ENCODE measurements at regions of chr15 and their contacts with region 1.

Region 1: GRCh38 chr15:73633111-73633990 is at the start of gene NPTN:
- DNase-seq: peak; percentile 96
- CTCF ChIP-seq: no peak

Region 2: DNA sequence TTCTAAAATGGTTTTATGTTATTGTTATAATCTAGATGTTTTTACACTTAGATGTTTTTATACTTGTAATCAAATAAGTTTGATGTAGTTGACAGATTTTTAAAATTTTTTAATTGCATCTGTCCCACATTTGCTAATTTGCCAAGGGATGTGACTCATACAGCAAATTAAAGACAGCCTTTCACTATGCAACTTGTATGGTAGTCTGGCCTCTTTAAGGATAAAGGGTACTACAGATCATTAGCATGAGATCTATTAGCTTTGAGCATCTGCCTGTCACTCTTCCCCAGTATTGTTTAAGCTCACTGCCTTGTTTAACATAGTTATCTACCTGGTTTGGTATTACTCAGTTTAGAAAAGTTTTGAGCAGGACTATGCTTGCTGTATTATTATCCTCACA is 83.2 kb before region 1 on chr15:
- CTCF ChIA-PET with region 1: interaction called, 31 read pairs
- POLR2A ChIA-PET with region 1: interaction called, 4 read pairs
- DNase-seq: no peak
- CTCF ChIP-seq: no peak

Region 3: GRCh38 chr15:73584699-73585420 is 48.5 kb before region 1 on chr15:
- CTCF ChIA-PET with region 1: interaction called, 15 read pairs
- POLR2A ChIA-PET with region 1: interaction called, 3 read pairs
- DNase-seq: no peak
- CTCF ChIP-seq: no peak

Region 4: GRCh38 chr15:73650416-73651126 is 17.2 kb after region 1 on chr15:
- CTCF ChIA-PET with region 1: interaction called, 38 read pairs
- POLR2A ChIA-PET with region 1: interaction called, 3 read pairs
- DNase-seq: peak; percentile 47
- CTCF ChIP-seq: no peak

Region 5: DNA sequence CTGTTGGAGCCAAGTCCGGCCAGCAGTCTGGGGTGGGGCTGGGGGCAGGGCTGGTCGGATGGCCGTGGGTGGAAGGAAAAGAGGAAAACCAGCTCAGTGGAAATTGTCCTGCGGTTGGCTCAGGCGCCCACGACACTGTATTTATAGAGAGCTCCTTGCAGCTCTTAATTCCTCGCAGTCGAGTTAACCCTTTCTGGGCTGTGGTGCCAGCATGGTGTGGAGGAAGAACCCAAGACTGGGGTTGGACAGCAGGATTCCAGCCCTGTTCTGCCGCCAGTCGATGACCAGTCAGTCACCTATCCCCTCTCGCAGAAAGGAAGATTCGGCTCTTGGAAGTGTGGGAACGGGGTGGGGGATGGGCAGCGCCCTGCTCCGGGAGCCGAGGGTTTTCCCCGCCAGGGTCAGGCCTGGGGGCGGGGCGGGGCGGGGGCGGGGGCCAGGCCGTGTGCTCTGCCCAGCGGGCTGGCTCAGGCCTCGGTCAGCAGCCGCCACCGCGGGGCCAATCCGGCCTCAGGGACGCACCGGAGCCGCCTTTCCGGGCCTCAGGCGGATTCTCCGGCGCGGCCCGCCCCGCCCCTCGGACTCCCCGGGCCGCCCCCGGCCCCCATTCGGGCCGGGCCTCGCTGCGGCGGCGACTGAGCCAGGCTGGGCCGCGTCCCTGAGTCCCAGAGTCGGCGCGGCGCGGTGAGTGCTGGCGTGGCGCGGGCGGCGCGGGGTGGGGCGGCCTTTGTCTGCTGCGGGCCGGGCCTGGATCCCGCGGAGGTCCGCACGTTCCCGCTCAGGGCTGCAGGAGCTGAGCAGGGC is 50.6 kb after region 1 on chr15 and contains the start of gene CD276:
- CTCF ChIA-PET with region 1: interaction called, 40 read pairs
- POLR2A ChIA-PET with region 1: no interaction called
- DNase-seq: peak; percentile 78
- CTCF ChIP-seq: no peak

Region 6: DNA sequence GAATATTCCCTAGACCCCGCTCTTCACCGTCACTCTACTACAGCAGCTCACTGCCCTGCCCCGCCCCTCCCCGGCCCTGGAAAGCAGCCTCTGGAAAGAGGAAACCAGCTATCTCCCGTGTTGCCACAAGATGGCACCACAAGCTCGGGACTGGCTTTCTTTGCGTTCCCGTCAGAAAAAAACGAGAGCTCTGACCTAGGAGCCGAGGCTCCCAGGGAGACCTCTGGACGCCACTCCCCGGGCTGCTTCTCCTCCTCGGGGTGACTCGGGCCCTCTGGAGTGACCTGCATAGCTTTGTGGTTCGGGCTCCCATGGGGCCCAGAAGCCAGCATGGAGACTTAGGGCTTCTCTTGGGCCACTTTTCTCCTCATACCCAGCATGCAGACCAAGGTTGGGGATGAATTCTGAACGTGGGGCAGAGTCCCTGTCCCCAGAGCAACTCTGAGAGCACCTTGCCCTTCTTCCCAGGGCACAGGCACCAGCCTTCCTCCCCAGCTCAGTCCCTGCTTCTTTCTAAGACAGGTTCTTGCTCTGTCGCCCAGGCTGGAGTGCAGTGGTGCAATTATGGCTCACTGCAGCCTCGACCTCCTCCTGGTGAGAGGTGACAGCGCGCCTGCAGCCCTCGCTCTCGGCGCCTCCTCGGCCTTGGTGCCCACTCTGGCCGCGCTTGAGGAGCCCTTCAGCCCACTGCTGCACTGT is 339.8 kb after region 1 on chr15:
- CTCF ChIA-PET with region 1: no interaction called
- POLR2A ChIA-PET with region 1: no interaction called
- DNase-seq: peak; percentile 86
- CTCF ChIP-seq: peak; percentile 90

Measured in GM10248 (cell line).